Left ventricle myocardium superior (tissue), 1 donor: ENCODE measurements at regions of chr12 and their contacts with region 1.

Region 1: GRCh38 chr12:14845350-14845750 is 2.0 kb upstream of the ART4 start:
- DNase-seq: no peak
- ATAC-seq: peak; percentile 43

Region 2: DNA sequence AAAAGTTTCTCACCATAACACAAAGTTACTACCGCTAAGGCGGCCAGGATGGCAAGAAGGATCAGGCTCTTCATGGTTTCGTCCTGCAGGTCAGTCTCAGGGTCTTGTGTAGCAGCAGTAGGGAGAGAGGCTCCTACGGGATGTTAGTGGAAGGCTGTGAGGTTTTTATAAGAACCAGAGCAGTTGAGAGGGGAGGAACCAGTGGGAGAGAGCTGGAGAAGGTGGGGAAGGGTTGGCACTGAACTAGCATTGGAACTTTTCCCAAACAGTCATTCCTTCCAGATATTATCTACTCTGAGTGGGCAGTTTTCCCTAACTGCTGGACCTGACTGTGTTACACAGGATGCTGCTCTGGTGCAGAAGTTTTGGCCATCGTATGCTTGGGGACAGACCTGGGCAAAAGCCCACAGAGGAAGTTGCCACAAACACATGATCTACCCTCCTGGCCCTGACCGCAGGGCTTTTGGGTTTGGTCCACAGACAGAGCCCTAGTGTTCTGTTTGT is 40.4 kb after region 1 on chr12 and contains the start of gene MGP:
- intact Hi-C with region 1: loop called (anchors 5 kb)
- DNase-seq: peak; percentile 61
- ATAC-seq: peak; percentile 88
- total RNA-seq, gene MGP: 295 TPM

Region 3: DNA sequence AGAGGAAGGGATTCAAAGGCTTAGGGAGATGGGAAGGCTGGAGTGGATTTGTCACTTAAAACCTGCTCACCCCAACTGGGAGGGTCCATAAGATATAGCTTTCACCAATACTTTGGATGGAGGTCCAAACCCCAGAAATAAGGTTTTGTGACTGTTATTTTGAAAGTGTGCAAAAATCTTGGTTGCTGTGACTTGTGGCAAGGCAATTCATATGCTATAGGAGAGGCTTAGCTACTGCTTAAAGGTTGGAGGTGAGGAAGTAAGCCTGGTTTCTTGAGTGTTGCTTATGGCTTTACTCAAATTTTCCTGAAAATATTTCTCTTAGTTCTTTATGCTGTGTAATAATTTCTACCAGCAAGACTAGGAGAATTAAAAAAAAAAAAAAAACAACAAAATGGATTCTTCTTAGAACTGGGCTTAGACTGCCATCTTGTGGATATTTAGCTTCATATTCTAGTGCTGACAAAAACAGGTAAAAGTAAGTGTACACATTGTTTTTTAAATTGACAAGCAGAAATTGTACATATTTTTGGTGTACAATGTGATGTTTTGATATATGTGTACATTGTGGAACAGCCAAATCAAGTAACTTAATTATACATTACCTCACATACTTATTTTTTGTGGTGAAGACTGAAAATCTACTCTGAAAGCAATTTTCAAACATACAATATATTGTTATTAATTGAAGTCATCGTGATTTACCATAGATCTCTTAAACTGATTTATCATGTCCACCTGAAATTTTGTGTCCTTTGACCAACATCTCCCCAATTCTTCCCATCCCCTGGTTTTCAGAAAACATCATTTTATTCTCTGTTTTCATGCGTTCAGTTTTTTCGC is 150.5 kb after region 1 on chr12:
- intact Hi-C with region 1: loop called (anchors 2 kb)
- DNase-seq: no peak
- ATAC-seq: peak; percentile 51